Activated T-helper 1 cell treated with anti-CD3 and anti-CD28 coated beads, Interleukin-12 subunit alpha, Interleukin-12 subunit beta, Interleukin-2, Interleukin-4 antibody, amounts not matched to agents 30 ng/mL and 10 ng/mL and 1 ng/mL, durations not matched to agents 14 hours and 24 hours and 36 hours (primary cell): ENCODE measurements at regions of chr1 and their contacts with region 1.

Region 1: GRCh38 chr1:61724813-61725694 is at the start of gene TM2D1:
- DNase-seq: peak; percentile 86
- H3K4me3 Mint-ChIP-seq: peak within 1 kb of the TSS; percentile 99
- H3K27ac Mint-ChIP-seq: peak within 1 kb of the TSS; percentile 99
- H3K4me1 Mint-ChIP-seq: peaks cover 18% of the 10 kb centered on the region
- H3K27me3 Mint-ChIP-seq: peaks cover 2% of the 10 kb centered on the region
- total RNA-seq, gene TM2D1: 28.3 and 29.6 TPM in 2 replicates

Region 2: GRCh38 chr1:59814180-59814900 is 1910.7 kb before region 1 on chr1:
- intact Hi-C with region 1: loop called (anchors 10 kb)
- DNase-seq: peak; percentile 76
- H3K4me3 Mint-ChIP-seq: peak overlapping the region; percentile 81
- H3K27ac Mint-ChIP-seq: peak overlapping the region; percentile 43
- H3K4me1 Mint-ChIP-seq: peaks cover 4% of the 10 kb centered on the region
- H3K27me3 Mint-ChIP-seq: peaks cover 24% of the 10 kb centered on the region

Region 3: GRCh38 chr1:61337981-61338848 is 386.8 kb before region 1 on chr1:
- intact Hi-C with region 1: loop called (anchors 10 kb)
- DNase-seq: no peak
- H3K4me3 Mint-ChIP-seq: no peak overlapping the region
- H3K27ac Mint-ChIP-seq: no peak overlapping the region
- H3K4me1 Mint-ChIP-seq: peaks cover under 1% of the 10 kb centered on the region
- H3K27me3 Mint-ChIP-seq: peaks cover 32% of the 10 kb centered on the region

Region 4: DNA sequence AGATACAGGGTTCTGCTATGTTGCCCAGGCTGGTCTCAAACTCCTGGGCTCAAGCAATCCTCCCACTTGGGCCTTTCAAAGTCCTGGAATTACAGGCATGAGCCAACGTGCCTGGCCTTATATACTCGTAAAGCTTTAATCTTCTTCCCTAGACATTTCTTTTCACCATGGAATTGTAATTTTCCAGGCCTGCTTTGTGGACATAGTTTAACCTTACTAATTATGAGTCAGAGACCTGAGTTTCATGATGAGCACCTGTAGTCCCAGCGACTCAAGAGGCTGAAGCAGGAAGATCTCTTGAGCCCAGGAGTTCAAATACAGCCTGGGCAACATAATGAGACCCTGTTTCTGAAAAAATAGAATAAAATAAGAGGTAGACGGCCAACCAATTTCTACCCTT is 29.5 kb after region 1 on chr1:
- intact Hi-C with region 1: no loop called
- DNase-seq: no peak
- H3K4me3 Mint-ChIP-seq: no peak overlapping the region
- H3K27ac Mint-ChIP-seq: no peak overlapping the region
- H3K4me1 Mint-ChIP-seq: peaks cover 6% of the 10 kb centered on the region
- H3K27me3 Mint-ChIP-seq: no peaks in the 10 kb centered on the region

Region 5: DNA sequence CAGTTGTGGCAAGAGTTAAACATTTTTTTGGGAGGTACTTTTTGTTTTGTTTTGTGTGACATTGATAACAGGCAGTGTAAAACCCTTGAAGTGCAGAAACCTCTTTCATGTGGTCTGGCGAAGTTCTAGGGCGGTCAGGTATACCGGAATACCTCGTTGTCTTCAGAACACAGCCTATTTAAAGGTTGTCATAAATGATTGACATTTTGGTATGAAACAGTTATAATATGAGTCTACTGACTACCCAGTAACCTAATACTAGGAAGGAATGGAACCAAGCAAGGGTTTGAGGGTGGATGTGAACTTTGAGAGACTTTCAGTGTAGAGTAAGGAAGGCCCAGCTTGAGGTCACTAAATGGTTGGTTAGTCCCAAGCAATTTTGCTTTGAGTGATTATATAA is 57.7 kb after region 1 on chr1:
- intact Hi-C with region 1: loop called (anchors 1 kb)
- DNase-seq: peak; percentile 70
- H3K4me3 Mint-ChIP-seq: no peak overlapping the region
- H3K27ac Mint-ChIP-seq: peak overlapping the region; percentile 78
- H3K4me1 Mint-ChIP-seq: peaks cover 57% of the 10 kb centered on the region
- H3K27me3 Mint-ChIP-seq: no peaks in the 10 kb centered on the region

Region 6: DNA sequence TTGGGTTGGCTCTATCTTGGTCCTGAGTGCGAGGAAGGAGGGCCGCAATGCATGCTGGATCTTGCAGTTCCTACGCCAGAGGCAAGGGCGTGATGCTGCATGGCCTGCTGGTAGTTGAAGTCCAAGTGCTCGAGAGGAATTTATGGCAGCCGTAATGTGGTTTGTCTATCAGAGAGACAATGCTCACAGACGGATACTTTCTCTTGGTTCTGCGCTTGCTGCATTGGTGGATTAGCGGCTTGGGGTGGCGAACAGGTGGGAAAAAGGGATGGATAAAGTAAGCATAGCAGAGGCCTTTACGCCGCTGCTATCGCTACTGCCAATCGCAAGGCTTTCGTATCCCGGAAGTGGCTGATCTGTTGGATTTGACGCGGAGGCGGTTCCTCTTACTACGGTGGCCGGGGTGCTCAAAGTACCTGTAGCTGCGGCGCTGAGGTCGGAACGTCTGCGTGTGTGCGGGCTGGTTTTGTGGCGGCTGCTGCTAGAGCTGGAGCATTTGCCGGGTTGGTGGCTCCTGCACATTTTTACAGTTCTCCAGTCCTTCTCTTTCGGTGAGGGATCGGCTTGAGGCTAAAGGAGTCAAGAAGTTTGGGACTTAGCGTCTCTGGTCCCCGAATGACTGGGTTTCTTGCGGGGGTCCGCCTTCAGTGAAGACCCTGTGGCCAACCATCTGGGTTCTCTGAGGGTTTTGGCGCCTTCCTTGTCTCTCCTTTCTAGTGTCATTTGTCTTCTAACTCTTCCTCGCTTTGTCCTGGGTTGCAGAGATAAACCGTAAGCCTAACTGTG is 1058.9 kb after region 1 on chr1 and contains the start of gene ATG4C:
- intact Hi-C with region 1: loop called (anchors 5 kb)
- DNase-seq: peak; percentile 90
- H3K4me3 Mint-ChIP-seq: no peak within 1 kb of the TSS
- H3K27ac Mint-ChIP-seq: no peak within 1 kb of the TSS
- H3K4me1 Mint-ChIP-seq: peaks cover 8% of the 10 kb centered on the region
- H3K27me3 Mint-ChIP-seq: peaks cover 4% of the 10 kb centered on the region
- total RNA-seq, gene ATG4C: 8.8 TPM in 2 replicates